ENCODE measurements at regions of chr1 and their contacts with region 1.

Region 1: GRCh38 chr1:45569962-45570581 is 13.8 kb upstream of the NASP start:
- DNase-seq: peak; percentile 82
- ATAC-seq: peak; percentile 99
- H3K4me3 Mint-ChIP-seq: no peak overlapping the region
- H3K27ac Mint-ChIP-seq: no peak overlapping the region
- H3K4me1 Mint-ChIP-seq: no peaks in the 10 kb centered on the region
- H3K27me3 Mint-ChIP-seq: no peaks in the 10 kb centered on the region

Region 2: GRCh38 chr1:45348716-45349677 is 221.1 kb before region 1 on chr1:
- CTCF ChIA-PET with region 1: interaction called, 3 read pairs
- POLR2A ChIA-PET with region 1: interaction called, 4 read pairs
- intact Hi-C with region 1: loop called in 1 of 2 experiments (anchors 5 kb)
- DNase-seq: no peak
- ATAC-seq: peak; percentile 60
- H3K4me3 Mint-ChIP-seq: no peak overlapping the region
- H3K27ac Mint-ChIP-seq: peak overlapping the region; percentile 45
- H3K4me1 Mint-ChIP-seq: peaks cover 4% of the 10 kb centered on the region
- H3K27me3 Mint-ChIP-seq: no peaks in the 10 kb centered on the region

Region 3: DNA sequence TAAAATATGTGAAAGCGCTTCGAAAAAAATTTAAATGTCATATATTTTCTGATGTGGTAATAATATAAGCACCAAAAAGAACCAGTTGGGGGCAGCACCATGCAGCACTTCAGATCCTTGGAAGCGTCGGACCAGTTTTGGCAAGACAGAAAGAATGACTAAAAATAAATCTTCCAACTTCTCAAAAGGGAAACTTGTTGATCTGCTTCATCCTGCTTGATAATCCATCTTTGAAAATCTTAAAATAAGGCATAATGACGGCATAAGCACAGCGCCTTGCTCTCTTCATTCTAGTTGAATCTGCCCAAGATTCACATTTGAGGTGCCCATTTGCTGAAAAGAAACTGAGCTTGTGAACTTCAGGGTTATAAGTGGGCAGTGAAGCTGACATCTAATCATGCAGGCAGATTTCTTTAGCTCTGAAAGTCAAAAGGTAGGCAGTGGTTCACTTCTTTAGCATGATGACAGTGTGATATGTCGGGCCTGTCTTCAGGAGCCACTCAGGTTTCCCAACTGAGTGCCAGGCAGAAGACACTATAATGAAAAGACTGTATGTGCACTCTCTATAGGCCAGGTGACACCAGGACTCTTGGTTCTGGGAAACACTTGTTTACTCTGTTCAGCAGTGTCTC is 210.1 kb before region 1 on chr1:
- CTCF ChIA-PET with region 1: interaction called, 15 read pairs
- POLR2A ChIA-PET with region 1: no interaction called
- intact Hi-C with region 1: loop called in 1 of 2 experiments (anchors 1 kb)
- DNase-seq: peak; percentile 76
- ATAC-seq: peak; percentile 79
- H3K4me3 Mint-ChIP-seq: no peak overlapping the region
- H3K27ac Mint-ChIP-seq: peak overlapping the region; percentile 4
- H3K4me1 Mint-ChIP-seq: peaks cover 11% of the 10 kb centered on the region
- H3K27me3 Mint-ChIP-seq: no peaks in the 10 kb centered on the region

Region 4: DNA sequence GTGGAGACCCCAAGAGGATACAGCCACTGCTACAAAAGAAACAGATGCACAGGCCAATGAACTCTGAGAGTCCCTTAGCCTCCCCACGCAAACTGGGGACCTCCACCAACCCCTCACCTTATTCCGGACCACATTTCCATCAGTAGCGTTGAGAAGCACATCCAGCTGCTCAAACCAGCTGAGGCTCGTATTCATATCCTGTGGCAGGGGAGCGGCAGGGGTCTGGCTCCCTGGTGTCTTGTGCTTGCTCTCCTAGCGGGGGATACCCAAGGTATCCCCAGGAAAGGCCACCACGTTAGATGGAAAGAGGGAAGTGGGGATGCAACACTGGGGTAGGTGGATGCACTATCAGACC is 70.7 kb before region 1 on chr1:
- CTCF ChIA-PET with region 1: interaction called, 8 read pairs
- POLR2A ChIA-PET with region 1: no interaction called
- intact Hi-C with region 1: loop called in 1 of 2 experiments (anchors 1 kb)
- DNase-seq: peak; percentile 45
- ATAC-seq: no peak
- H3K4me3 Mint-ChIP-seq: peak overlapping the region; percentile 81
- H3K27ac Mint-ChIP-seq: peak overlapping the region; percentile 92
- H3K4me1 Mint-ChIP-seq: peaks cover 23% of the 10 kb centered on the region
- H3K27me3 Mint-ChIP-seq: no peaks in the 10 kb centered on the region

Region 5: GRCh38 chr1:45512641-45513054 is 57.4 kb before region 1 on chr1:
- CTCF ChIA-PET with region 1: interaction called, 107 read pairs
- POLR2A ChIA-PET with region 1: no interaction called
- intact Hi-C with region 1: loop called (anchors 1 kb)
- DNase-seq: peak; percentile 77
- ATAC-seq: peak; percentile 85
- H3K4me3 Mint-ChIP-seq: no peak overlapping the region
- H3K27ac Mint-ChIP-seq: no peak overlapping the region
- H3K4me1 Mint-ChIP-seq: peaks cover 11% of the 10 kb centered on the region
- H3K27me3 Mint-ChIP-seq: no peaks in the 10 kb centered on the region

Region 6: DNA sequence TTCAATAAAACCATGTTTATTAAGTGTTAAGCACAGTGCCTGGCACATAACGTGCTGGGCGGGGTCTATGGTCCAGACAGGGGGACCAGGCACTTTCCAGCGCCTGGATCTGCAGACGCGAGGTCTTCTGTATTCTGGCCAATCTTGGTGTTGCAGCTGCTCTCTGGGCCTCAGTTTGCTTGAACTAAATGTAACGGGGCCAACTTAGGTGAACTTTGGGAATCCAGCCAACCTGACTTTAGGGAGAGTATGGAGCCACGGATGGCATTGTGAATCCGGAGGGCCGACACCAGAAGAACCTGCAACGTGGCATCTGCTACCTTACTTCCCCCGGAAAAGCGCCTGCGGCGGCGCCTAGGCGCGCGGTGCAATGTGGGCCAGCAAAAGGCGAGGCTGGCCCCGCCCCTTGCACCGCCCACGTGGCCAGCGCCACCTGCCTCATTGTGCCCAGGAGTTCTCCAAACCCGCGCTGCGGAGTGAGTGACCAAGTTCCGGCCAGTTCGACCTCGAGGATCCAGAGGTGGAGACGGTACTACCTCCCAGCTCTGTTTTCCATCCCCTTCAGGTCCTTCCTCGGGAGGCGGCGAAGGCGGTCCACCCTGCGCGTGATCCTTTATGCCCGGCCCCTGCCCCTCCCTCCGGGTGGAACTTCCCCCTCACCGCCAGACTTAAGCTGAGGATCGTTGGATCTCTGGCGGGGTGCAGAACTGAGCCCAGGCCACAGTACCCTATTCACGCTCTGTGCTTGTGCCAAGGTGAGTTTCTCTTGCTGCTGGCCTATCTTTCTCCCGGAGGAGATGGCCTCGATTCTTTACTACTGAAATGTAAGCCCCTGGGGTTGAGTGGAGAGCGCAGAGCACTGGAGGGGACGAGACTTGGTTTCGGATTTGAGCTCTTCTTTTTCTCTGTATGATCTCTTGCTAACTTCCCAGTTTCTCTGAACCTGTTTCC is 19.4 kb before region 1 on chr1 and contains the start of gene AKR1A1:
- CTCF ChIA-PET with region 1: interaction called, 6 read pairs
- POLR2A ChIA-PET with region 1: interaction called, 3 read pairs
- intact Hi-C with region 1: loop called (anchors 1 to 2 kb)
- DNase-seq: peak; percentile 95
- ATAC-seq: peak; percentile 94
- H3K4me3 Mint-ChIP-seq: peak within 1 kb of the TSS; percentile 94
- H3K27ac Mint-ChIP-seq: peak within 1 kb of the TSS; percentile 94
- H3K4me1 Mint-ChIP-seq: peaks cover 16% of the 10 kb centered on the region
- H3K27me3 Mint-ChIP-seq: no peaks in the 10 kb centered on the region
- total RNA-seq, gene AKR1A1: 140 to 181 TPM

Region 7: DNA sequence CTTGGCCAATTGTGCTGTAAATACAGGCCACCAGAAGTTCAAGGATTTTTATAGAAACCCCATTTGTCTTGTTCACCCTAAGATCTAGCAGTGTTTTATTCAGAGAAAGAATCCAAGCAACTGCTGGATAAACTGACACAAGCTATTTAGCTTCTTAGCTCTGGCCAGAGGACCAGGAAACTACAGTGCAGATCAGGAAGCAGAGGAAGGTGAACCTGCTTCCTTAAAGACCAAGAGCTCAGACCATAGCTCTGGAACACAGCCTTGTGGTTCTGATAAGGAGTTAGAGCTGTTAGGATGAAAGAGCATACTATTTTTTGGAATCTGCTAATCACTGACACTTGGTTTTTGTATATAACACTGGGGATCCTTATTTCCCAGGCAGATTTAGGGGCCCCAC is 59.0 kb after region 1 on chr1:
- CTCF ChIA-PET with region 1: no interaction called
- POLR2A ChIA-PET with region 1: no interaction called
- intact Hi-C with region 1: no loop called
- DNase-seq: no peak
- ATAC-seq: no peak
- H3K4me3 Mint-ChIP-seq: no peak overlapping the region
- H3K27ac Mint-ChIP-seq: no peak overlapping the region
- H3K4me1 Mint-ChIP-seq: no peaks in the 10 kb centered on the region
- H3K27me3 Mint-ChIP-seq: no peaks in the 10 kb centered on the region

Region 8: GRCh38 chr1:45669379-45669778 is 99.3 kb after region 1 on chr1:
- CTCF ChIA-PET with region 1: no interaction called
- POLR2A ChIA-PET with region 1: no interaction called
- intact Hi-C with region 1: no loop called
- DNase-seq: no peak
- ATAC-seq: no peak
- H3K4me3 Mint-ChIP-seq: no peak overlapping the region
- H3K27ac Mint-ChIP-seq: no peak overlapping the region
- H3K4me1 Mint-ChIP-seq: peaks cover 55% of the 10 kb centered on the region
- H3K27me3 Mint-ChIP-seq: no peaks in the 10 kb centered on the region

Region 9: GRCh38 chr1:45785583-45785982 is 215.5 kb after region 1 on chr1:
- CTCF ChIA-PET with region 1: no interaction called
- POLR2A ChIA-PET with region 1: no interaction called
- intact Hi-C with region 1: no loop called
- DNase-seq: peak; percentile 44
- ATAC-seq: peak; percentile 96
- H3K4me3 Mint-ChIP-seq: peak overlapping the region; percentile 60
- H3K27ac Mint-ChIP-seq: peak overlapping the region; percentile 47
- H3K4me1 Mint-ChIP-seq: peaks cover 13% of the 10 kb centered on the region
- H3K27me3 Mint-ChIP-seq: peaks cover 3% of the 10 kb centered on the region

Region 10: DNA sequence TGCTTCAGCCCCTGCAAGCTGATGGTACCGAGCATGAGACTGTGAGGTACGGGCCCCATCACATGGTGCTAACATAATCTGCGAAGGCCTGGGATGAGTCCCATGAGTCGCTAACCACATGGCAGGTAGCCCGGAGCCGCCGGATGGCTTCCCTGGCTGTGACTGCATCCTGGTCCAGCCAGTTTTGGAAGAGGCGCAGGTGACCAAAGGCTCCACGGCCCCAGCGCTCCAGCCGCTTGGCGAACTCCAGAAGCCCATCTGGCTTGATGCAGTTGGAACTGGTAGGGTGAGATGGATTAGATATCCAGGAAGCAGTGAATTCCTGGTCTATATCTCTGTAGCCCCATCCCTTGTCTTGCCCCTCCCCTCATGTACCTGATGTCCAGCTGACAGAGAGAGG is 708.7 kb after region 1 on chr1:
- CTCF ChIA-PET with region 1: no interaction called
- POLR2A ChIA-PET with region 1: no interaction called
- intact Hi-C with region 1: no loop called
- DNase-seq: no peak
- ATAC-seq: no peak
- H3K4me3 Mint-ChIP-seq: no peak overlapping the region
- H3K27ac Mint-ChIP-seq: no peak overlapping the region
- H3K4me1 Mint-ChIP-seq: no peaks in the 10 kb centered on the region
- H3K27me3 Mint-ChIP-seq: no peaks in the 10 kb centered on the region